ENCODE measurements at regions of chr11 and their contacts with region 1.

Region 1: GRCh38 chr11:10762185-10762584 is 11.1 kb downstream of the CTR9 start:
- DNase-seq: no peak
- ATAC-seq: peak; percentile 73
- H3K4me3 Mint-ChIP-seq: peak overlapping the region; percentile 30
- H3K27ac Mint-ChIP-seq: peak overlapping the region; percentile 65
- H3K4me1 Mint-ChIP-seq: peaks cover 29% of the 10 kb centered on the region
- H3K27me3 Mint-ChIP-seq: no peaks in the 10 kb centered on the region
- CTCF ChIP-seq: no peak

Region 2: DNA sequence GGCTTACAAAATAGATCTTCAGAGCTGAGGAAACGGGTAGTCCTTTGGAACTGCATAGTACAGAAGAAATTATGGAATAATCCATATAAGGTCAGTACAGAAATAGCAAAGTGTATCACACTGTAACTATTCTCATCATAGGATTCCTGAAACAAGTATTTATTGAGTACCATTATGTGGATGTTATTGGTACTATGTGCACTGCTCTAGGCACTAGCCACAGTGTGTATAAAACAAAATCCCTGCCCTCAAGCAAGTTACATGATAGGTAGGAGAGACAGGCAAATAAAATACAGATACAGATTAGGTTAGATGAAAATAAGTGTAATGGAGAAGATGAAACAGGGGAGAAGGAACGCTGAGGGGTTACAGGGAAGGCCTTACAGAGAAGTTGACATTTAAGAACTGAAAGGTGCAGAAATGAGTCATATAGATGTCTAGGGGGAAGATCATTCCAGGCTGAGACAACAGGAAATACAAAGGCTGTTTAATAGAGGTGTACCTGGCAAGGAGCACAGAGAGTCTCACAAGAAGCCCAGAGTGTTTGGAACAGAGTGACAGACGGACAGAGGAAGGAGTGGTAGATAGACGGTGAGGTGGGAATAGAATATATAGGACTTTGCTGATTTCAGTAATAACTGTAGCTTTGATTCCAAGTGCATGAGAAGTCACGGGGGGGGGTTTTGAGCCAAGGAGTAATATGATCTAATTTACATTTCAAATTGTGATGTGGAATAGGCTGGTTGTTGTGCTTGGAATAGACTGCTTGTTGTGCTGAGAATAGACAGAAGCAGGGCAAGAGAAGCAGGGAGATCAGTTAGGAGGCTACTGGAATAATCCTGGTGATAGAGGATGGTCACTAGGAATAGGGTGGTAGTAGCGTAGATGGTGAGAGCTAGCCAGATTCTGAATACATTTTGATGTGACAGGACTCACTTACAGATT is 234.9 kb before region 1 on chr11:
- CTCF ChIA-PET with region 1: no interaction called
- POLR2A ChIA-PET with region 1: no interaction called
- intact Hi-C with region 1: no loop called
- DNase-seq: no peak
- ATAC-seq: peak; percentile 95
- H3K4me3 Mint-ChIP-seq: peak overlapping the region; percentile 21
- H3K27ac Mint-ChIP-seq: peak overlapping the region; percentile 77
- H3K4me1 Mint-ChIP-seq: peaks cover 21% of the 10 kb centered on the region
- H3K27me3 Mint-ChIP-seq: no peaks in the 10 kb centered on the region
- CTCF ChIP-seq: no peak

Region 3: DNA sequence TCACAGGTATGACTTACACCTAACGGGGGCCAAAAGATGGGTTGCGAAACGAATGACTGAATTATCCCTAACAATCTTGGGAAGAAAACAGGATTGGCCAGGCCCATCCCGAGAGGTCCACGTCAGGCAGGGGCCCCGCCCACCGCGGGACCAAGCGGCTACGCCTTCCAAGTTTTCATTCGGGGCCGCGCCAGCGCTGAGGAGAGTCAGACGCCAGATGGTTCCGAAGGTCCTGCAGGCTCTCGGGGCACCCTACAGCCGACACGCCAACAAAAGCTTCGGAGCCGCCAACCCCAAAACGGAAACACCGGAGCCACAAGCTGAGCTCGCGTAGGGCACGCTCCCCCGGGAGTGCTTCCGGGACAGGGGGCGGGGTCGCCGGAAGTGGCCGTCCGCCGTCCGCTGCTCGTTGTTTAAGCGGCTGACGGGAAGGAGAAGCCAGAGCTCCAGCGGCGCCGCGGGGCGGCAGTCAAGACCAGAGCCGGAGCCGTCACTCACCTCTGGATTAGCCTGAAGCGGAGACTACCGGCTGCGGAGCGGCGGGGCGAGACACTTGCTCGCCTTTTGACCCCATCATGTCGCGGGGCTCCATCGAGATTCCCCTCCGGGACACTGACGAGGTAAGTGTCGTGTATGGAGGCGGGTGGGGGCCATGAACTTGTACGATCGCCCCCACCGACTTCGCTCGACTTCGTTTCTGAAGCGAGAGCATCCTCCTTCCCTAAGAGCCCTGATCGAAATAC is 11.2 kb before region 1 on chr11 and contains the start of gene CTR9:
- CTCF ChIA-PET with region 1: no interaction called
- POLR2A ChIA-PET with region 1: interaction called, 4 read pairs
- intact Hi-C with region 1: loop called (anchors 1 kb)
- DNase-seq: peak; percentile 90
- ATAC-seq: peak; percentile 90
- H3K4me3 Mint-ChIP-seq: peak within 1 kb of the TSS; percentile 95
- H3K27ac Mint-ChIP-seq: peak within 1 kb of the TSS; percentile 89
- H3K4me1 Mint-ChIP-seq: peaks cover 23% of the 10 kb centered on the region
- H3K27me3 Mint-ChIP-seq: no peaks in the 10 kb centered on the region
- CTCF ChIP-seq: no peak
- total RNA-seq, gene CTR9: 50.6 and 52.8 TPM in 2 replicates

Region 4: GRCh38 chr11:11608783-11609232 is 846.6 kb after region 1 on chr11:
- CTCF ChIA-PET with region 1: no interaction called
- POLR2A ChIA-PET with region 1: no interaction called
- intact Hi-C with region 1: no loop called
- DNase-seq: no peak
- ATAC-seq: no peak
- H3K4me3 Mint-ChIP-seq: no peak overlapping the region
- H3K27ac Mint-ChIP-seq: no peak overlapping the region
- H3K4me1 Mint-ChIP-seq: no peaks in the 10 kb centered on the region
- H3K27me3 Mint-ChIP-seq: peaks cover 23% of the 10 kb centered on the region
- CTCF ChIP-seq: no peak

Measured in activated B cell treated with CpG ODN at 0.5 μM for 24 hours (primary cell).